ENCODE measurements at regions of chr20 and their contacts with region 1.

Region 1: DNA sequence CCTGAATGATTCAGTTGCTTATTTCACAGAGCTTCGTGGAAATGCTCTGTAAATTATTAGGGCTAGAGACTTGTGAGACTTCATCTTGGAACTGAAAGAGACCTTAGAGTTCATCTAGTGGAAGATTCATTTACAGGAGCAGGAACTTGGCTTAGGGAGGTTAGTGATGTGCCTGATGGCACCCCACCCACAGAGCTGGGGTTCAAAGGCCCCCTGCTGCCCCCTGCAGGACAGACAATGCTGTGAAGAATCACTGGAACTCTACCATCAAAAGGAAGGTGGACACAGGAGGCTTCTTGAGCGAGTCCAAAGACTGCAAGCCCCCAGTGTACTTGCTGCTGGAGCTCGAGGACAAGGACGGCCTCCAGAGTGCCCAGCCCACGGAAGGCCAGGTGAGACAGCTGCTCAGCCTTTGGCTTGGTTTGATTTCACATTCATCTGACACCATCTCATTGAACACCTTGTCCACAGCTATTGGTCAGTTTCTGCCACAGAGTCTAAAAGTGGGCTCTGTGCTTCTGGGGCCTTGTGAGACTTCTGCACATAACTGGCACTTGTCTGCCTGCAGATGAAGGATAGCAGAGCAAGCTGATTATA is 25.1 kb downstream of the MYBL2 start:
- DNase-seq: no peak
- H3K4me3 ChIP-seq: no peak overlapping the region
- CTCF ChIP-seq: peak; percentile 65

Region 2: DNA sequence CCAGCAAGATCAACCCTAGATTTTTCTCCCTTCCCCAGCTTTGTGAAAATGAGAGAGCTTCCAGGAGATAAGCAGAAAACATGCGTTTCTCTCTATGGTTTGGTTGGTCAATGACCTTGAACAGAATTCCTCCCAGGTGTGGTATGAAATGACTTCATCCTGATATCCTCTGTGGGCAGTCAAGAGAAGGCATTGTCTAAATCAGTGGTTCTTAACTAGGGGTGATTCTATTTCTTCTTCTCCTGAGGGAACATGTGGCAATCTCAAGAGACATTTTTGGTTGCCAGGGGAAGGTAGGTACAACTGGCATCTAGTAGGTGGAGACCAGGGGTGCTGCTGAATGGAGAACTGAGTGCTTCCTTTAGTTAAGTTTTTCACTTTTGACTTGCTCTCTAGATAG is 88.9 kb before region 1 on chr20:
- CTCF ChIA-PET with region 1: no interaction called
- POLR2A ChIA-PET with region 1: no interaction called
- DNase-seq: no peak
- H3K4me3 ChIP-seq: no peak overlapping the region
- CTCF ChIP-seq: no peak

Region 3: DNA sequence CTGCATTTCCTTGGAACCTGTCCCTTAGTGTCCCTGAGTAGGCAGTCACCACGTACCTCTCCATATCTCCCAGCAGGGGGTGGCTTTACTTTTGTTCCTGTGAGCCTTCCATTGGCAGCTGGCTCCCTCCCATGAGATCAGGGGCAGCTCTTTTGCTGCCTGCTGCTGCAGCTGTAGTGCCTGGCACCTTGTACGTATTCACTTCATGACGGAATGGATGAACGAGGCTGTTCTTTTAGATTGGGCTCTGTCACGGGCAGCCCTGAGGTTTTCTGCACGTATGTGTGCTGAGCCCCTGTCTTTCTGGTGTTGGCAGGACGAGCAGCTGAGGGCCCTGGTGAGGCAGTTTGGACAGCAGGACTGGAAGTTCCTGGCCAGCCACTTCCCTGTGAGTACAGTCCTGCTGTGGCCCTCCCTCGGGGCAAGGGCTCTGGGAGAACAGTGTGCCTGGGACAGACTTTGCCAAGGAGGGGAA is 10.5 kb before region 1 on chr20:
- CTCF ChIA-PET with region 1: interaction called, 12 read pairs
- POLR2A ChIA-PET with region 1: no interaction called
- DNase-seq: no peak
- H3K4me3 ChIP-seq: no peak overlapping the region
- CTCF ChIP-seq: no peak

Region 4: GRCh38 chr20:43724383-43724782 is 32.4 kb after region 1 on chr20:
- CTCF ChIA-PET with region 1: no interaction called
- POLR2A ChIA-PET with region 1: no interaction called
- DNase-seq: no peak
- H3K4me3 ChIP-seq: no peak overlapping the region
- CTCF ChIP-seq: no peak

Measured in AG04449 (cell line).